Caki2 (cell line): ENCODE measurements at regions of chr11 and their contacts with region 1.

Region 1: DNA sequence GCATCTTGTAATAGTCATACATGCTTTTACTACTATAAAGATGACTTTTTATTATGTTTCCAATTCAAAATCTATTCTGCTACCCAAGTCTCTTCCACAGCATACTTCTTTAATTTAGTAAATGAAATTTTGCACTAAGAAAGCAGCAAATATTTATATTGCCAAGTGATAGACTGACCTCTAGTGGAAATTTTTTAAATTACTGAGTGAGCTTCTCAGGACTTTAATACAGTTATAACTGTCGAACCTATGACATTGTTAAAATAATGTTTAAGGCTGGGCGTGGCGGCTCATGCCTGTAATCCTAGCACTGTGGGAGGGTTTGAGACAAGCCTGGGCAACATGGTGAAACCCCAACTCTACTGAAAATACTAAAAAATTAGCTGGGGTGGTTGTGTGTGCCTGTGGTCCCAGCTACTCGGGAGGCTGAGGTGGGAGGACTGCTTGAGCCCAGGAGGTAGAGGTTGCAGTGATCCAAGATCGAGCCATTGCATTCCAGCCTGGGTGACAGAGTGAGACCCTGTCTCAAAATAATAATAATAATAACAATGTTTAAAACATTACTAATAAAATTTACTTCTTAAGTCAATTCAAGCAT is 27.3 kb downstream of the STK33 start:
- DNase-seq: peak; percentile 44

Region 2: DNA sequence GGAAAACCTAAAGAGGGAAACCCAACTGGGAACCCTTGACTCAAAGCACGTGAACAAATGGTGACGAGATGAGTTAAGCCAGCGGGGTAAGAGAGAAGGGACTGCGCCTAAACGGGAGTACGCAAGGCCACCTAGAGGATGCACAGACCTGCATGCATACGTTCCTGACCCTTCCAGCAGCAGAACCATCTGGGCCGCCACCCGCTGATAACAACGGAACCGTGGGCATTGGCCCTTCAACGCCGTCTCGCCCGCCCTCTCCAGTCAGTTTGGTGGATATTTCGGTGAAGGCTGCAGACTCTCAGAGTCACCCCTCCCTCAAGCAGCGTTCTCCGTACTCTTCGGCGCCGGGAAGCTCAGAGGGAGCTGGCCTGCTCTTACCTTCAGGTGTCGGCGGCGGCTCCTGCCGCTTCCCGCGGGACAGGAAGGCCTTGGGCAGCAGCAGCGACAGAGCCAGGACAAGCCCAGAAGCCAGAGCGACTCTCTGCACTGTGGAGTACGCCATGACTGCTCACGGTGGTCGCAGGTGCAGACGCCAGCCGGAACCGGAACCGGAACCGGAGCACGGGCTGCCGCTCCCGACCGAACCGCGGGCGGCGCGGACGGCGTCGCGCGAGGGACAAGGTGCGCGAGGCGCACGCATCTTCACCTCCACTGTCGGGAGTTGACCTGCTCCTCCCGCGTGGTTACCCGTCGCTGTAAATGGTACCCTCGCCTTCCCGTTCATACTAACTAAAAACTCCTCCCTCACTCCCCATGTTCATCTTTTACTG is 398.0 kb before region 1 on chr11 and contains the start of gene RIC3:
- in situ Hi-C with region 1: loop called (anchors 25 kb)
- DNase-seq: no peak
- total RNA-seq, gene RIC3: not detected in 2 replicates

Region 3: GRCh38 chr11:8624698-8625097 is 58.0 kb after region 1 on chr11:
- in situ Hi-C with region 1: no loop called
- DNase-seq: no peak